Endothelial cell of umbilical vein (primary cell): ENCODE measurements at regions of chr10 and their contacts with region 1.

Region 1: GRCh38 chr10:74589226-74589673 is 237.2 kb upstream of the KAT6B start:
- DNase-seq: peak; percentile 99
- H3K4me3 ChIP-seq: no peak overlapping the region
- H3K27ac ChIP-seq: peak overlapping the region; percentile 71
- H3K4me1 ChIP-seq: peaks cover 16% of the 10 kb centered on the region
- H3K27me3 ChIP-seq: no peaks in the 10 kb centered on the region
- CTCF ChIP-seq: no peak
- POLR2A ChIP-seq: no peak

Region 2: DNA sequence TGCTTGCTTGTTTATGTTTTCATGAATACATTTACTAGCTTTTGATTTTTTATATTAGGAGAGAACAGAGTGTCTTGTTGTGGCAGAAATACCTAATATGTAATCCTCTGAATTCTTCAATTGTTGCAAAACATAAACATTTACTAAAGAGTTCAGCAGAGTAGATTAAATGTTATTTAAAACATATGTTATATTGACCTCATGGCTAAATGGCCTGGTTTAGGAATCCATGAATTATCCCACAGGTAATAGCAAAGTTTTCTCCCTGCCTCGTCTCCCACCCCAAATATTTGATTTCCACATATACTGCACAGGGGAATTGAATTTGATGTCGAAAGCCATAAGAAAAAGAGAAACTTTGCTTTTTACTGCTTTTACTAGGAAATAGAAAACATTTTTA is 326.4 kb before region 1 on chr10:
- CTCF ChIA-PET with region 1: no interaction called
- POLR2A ChIA-PET with region 1: no interaction called
- dilution Hi-C with region 1: no loop called
- intact Hi-C with region 1: loop called (anchors 5 kb)
- DNase-seq: no peak
- H3K4me3 ChIP-seq: no peak overlapping the region
- H3K27ac ChIP-seq: no peak overlapping the region
- H3K4me1 ChIP-seq: peaks cover 2% of the 10 kb centered on the region
- H3K27me3 ChIP-seq: no peaks in the 10 kb centered on the region
- CTCF ChIP-seq: no peak
- POLR2A ChIP-seq: no peak

Region 3: GRCh38 chr10:74502963-74503608 is 86.2 kb before region 1 on chr10:
- CTCF ChIA-PET with region 1: interaction called, 3 read pairs
- POLR2A ChIA-PET with region 1: interaction called, 3 read pairs
- dilution Hi-C with region 1: no loop called
- intact Hi-C with region 1: loop called (anchors 1 kb)
- DNase-seq: peak; percentile 90
- H3K4me3 ChIP-seq: peak overlapping the region in 1 of 3 experiments; percentile 49
- H3K27ac ChIP-seq: peak overlapping the region; percentile 81
- H3K4me1 ChIP-seq: peaks cover 42% of the 10 kb centered on the region
- H3K27me3 ChIP-seq: no peaks in the 10 kb centered on the region
- CTCF ChIP-seq: no peak
- POLR2A ChIP-seq: no peak